Natural killer cell (primary cell): ENCODE measurements at regions of chr17 and their contacts with region 1.

Region 1: DNA sequence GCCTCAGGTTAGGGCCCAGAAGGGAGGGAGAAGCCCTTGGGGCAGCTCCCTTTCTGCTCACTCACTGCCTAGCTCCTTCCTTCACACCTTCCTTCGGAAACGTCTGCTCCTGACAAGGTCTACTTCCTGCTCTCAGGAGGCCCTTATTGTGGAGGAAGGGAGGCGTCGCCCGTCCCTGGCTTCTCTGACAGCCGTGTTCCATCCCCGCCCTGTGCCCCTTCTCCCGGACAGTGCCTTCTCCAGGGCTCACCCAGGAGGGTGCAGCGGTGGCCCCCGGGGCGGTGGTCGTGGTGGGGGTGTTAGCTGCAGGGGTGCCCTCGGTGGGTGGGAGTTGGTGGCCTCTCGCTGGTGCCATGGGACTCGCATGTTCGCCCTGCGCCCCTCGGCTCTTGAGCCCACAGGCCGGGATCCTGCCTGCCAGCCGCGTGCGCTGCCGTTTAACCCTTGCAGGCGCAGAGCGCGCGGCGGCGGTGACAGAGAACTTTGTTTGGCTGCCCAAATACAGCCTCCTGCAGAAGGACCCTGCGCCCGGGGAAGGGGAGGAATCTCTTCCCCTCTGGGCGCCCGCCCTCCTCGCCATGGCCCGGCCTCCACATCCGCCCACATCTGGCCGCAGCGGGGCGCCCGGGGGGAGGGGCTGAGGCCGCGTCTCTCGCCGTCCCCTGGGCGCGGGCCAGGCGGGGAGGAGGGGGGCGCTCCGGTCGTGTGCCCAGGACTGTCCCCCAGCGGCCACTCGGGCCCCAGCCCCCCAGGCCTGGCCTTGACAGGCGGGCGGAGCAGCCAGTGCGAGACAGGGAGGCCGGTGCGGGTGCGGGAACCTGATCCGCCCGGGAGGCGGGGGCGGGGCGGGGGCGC is 231.9 kb downstream of the SEC14L1 start:
- DNase-seq: peak; percentile 75 to 76
- ATAC-seq: peak; percentile 54 to 71 (median 66)
- H3K4me3 ChIP-seq: peak overlapping the region; percentile 72
- H3K4me3 Mint-ChIP-seq: peak overlapping the region; percentile 81
- H3K27ac ChIP-seq: peak overlapping the region; percentile 44
- H3K27ac Mint-ChIP-seq: peak overlapping the region; percentile 72 to 82
- H3K4me1 ChIP-seq: peaks cover 60% of the 10 kb centered on the region
- H3K4me1 Mint-ChIP-seq: peaks cover 43 to 58% of the 10 kb centered on the region in 2 donors
- H3K27me3 ChIP-seq: no peaks in the 10 kb centered on the region
- H3K27me3 Mint-ChIP-seq: peaks cover 0 to 2% of the 10 kb centered on the region in 2 donors
- CTCF ChIP-seq: no peak

Region 2: DNA sequence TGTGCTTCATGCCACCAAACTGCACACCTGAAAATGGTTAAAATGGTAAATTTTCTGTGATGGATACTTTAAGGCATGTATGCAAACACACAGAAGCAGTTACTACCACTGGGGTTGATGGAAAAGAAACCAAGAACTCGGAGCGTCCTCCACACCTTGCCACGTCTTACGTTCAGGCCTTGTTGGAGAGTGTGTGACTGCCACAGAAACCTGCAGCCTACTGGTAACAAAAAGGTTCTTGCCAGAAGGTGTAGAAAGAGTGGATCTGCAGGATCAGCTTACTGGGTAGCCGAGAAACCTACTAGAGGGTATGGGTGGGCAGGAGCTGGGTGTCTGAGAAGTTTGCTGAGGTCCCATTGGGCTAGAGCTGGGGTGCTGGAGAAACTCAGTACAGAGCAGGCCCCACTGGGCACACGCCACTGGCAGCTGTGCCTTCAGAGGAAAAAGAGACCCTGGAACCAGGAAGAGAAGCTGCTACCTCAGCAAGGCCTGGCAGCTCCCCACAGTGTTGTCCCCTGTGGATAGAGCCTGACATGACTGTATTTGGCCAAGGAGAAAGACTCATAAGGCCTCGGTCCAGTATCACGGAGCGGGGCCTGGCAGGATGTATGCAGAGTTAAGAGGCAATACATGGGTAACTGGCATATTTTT is 27.3 kb before region 1 on chr17:
- intact Hi-C with region 1: loop called (anchors 2 kb)
- DNase-seq: no peak
- ATAC-seq: no peak
- H3K4me3 ChIP-seq: no peak overlapping the region
- H3K4me3 Mint-ChIP-seq: no peak overlapping the region
- H3K27ac ChIP-seq: no peak overlapping the region
- H3K27ac Mint-ChIP-seq: no peak overlapping the region
- H3K4me1 ChIP-seq: peaks cover 41% of the 10 kb centered on the region
- H3K4me1 Mint-ChIP-seq: peaks cover 50 to 51% of the 10 kb centered on the region in 2 donors
- H3K27me3 ChIP-seq: no peaks in the 10 kb centered on the region
- H3K27me3 Mint-ChIP-seq: no peaks in the 10 kb centered on the region
- CTCF ChIP-seq: no peak

Region 3: GRCh38 chr17:77441130-77441920 is 68.7 kb after region 1 on chr17:
- intact Hi-C with region 1: no loop called
- DNase-seq: peak; percentile 65 to 95
- ATAC-seq: peak; percentile 43 to 65 (median 56)
- H3K4me3 ChIP-seq: no peak overlapping the region
- H3K4me3 Mint-ChIP-seq: peak overlapping the region; percentile 82
- H3K27ac ChIP-seq: peak overlapping the region; percentile 91
- H3K27ac Mint-ChIP-seq: peak overlapping the region; percentile 86
- H3K4me1 ChIP-seq: peaks cover 100% of the 10 kb centered on the region
- H3K4me1 Mint-ChIP-seq: peaks cover 80 to 97% of the 10 kb centered on the region in 2 donors
- H3K27me3 ChIP-seq: no peaks in the 10 kb centered on the region
- H3K27me3 Mint-ChIP-seq: no peaks in the 10 kb centered on the region
- CTCF ChIP-seq: no peak